Naive thymus-derived CD4-positive, alpha-beta T cell (primary cell): ENCODE measurements at regions of chr2 and their contacts with region 1.

Region 1: DNA sequence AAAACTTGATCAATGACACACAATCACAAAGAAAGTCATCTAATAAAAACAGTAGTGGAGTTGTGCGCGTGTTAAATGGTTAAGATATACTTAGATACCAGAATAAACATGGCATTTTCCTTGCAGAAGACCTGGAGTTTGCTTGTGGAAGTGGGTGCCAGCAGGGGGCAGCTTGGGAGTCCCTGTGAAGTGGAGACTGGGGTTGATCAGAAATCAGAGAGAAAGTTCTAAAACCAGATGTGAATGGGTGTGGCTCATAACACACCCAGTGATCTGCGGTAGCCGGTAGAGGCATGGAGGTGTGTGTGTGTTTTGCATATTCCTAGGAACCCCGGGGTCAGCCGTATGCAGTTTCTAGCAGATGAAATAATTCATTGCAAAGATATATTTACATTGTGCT is 300.1 kb upstream of the TRIB2 start:
- DNase-seq: peak in 8 of 9 donors; percentile 26 to 72 (median 64)
- ATAC-seq: peak; percentile 83
- H3K4me3 ChIP-seq: no peak overlapping the region
- H3K4me3 Mint-ChIP-seq: peak overlapping the region in 9 of 10 donors; percentile 18 to 75 (median 30)
- H3K27ac ChIP-seq: no peak overlapping the region
- H3K27ac Mint-ChIP-seq: peak overlapping the region; percentile 24 to 77 (median 52)
- H3K4me1 ChIP-seq: peaks cover 16 to 23% of the 10 kb centered on the region in 2 donors
- H3K4me1 Mint-ChIP-seq: peaks cover 27 to 82% (median 66%) of the 10 kb centered on the region in 7 donors
- H3K27me3 ChIP-seq: no peaks in the 10 kb centered on the region
- H3K27me3 Mint-ChIP-seq: no peaks in the 10 kb centered on the region

Region 2: GRCh38 chr2:11829947-11830707 is 586.5 kb before region 1 on chr2:
- CTCF ChIA-PET with region 1: no interaction called
- POLR2A ChIA-PET with region 1: no interaction called
- intact Hi-C with region 1: loop called in 1 of 2 experiments (anchors 1 kb)
- DNase-seq: peak in 8 of 9 donors; percentile 53 to 73 (median 63)
- ATAC-seq: peak; percentile 86
- H3K4me3 ChIP-seq: peak overlapping the region; percentile 60
- H3K4me3 Mint-ChIP-seq: peak overlapping the region; percentile 80 to 97 (median 84)
- H3K27ac ChIP-seq: peak overlapping the region; percentile 46
- H3K27ac Mint-ChIP-seq: peak overlapping the region; percentile 21 to 87 (median 78)
- H3K4me1 ChIP-seq: peaks cover 20% of the 10 kb centered on the region in 2 donors
- H3K4me1 Mint-ChIP-seq: peaks cover 18 to 44% (median 33%) of the 10 kb centered on the region in 7 donors
- H3K27me3 ChIP-seq: no peaks in the 10 kb centered on the region
- H3K27me3 Mint-ChIP-seq: peaks cover 0 to 50% (median 0%) of the 10 kb centered on the region in 5 donors

Region 3: GRCh38 chr2:12127638-12128037 is 289.0 kb before region 1 on chr2:
- CTCF ChIA-PET with region 1: no interaction called
- POLR2A ChIA-PET with region 1: interaction called, 4 read pairs
- intact Hi-C with region 1: loop called in 1 of 2 experiments (anchors 1 kb)
- DNase-seq: peak in 6 of 9 donors; percentile 40 to 63 (median 56)
- ATAC-seq: peak; percentile 80
- H3K4me3 ChIP-seq: peak overlapping the region; percentile 10
- H3K4me3 Mint-ChIP-seq: peak overlapping the region in 5 of 10 donors; percentile 34 to 90 (median 73)
- H3K27ac ChIP-seq: peak overlapping the region; percentile 63
- H3K27ac Mint-ChIP-seq: peak overlapping the region in 3 of 9 donors; percentile 84 to 95 (median 87)
- H3K4me1 ChIP-seq: peaks cover 22 to 61% of the 10 kb centered on the region in 2 donors
- H3K4me1 Mint-ChIP-seq: peaks cover 0 to 22% (median 0%) of the 10 kb centered on the region in 7 donors
- H3K27me3 ChIP-seq: no peaks in the 10 kb centered on the region
- H3K27me3 Mint-ChIP-seq: no peaks in the 10 kb centered on the region

Region 4: GRCh38 chr2:12399240-12399639 is 17.4 kb before region 1 on chr2:
- CTCF ChIA-PET with region 1: no interaction called
- POLR2A ChIA-PET with region 1: no interaction called
- intact Hi-C with region 1: no loop called
- DNase-seq: no peak
- ATAC-seq: no peak
- H3K4me3 ChIP-seq: no peak overlapping the region
- H3K4me3 Mint-ChIP-seq: no peak overlapping the region
- H3K27ac ChIP-seq: no peak overlapping the region
- H3K27ac Mint-ChIP-seq: no peak overlapping the region
- H3K4me1 ChIP-seq: no peaks in the 10 kb centered on the region
- H3K4me1 Mint-ChIP-seq: peaks cover 1 to 18% (median 11%) of the 10 kb centered on the region in 7 donors
- H3K27me3 ChIP-seq: no peaks in the 10 kb centered on the region
- H3K27me3 Mint-ChIP-seq: peaks cover 0 to 21% (median 3%) of the 10 kb centered on the region in 5 donors

Region 5: GRCh38 chr2:12430407-12431133 is 14.0 kb after region 1 on chr2:
- CTCF ChIA-PET with region 1: interaction called, 3 read pairs
- POLR2A ChIA-PET with region 1: no interaction called
- intact Hi-C with region 1: loop called in 1 of 2 experiments (anchors 1 kb)
- DNase-seq: peak in 6 of 9 donors; percentile 10 to 28 (median 20)
- ATAC-seq: peak; percentile 87
- H3K4me3 ChIP-seq: peak overlapping the region; percentile 47
- H3K4me3 Mint-ChIP-seq: peak overlapping the region; percentile 31 to 83 (median 77)
- H3K27ac ChIP-seq: peak overlapping the region; percentile 22
- H3K27ac Mint-ChIP-seq: peak overlapping the region; percentile 60 to 91 (median 82)
- H3K4me1 ChIP-seq: peaks cover 0 to 12% of the 10 kb centered on the region in 2 donors
- H3K4me1 Mint-ChIP-seq: peaks cover 25 to 70% (median 49%) of the 10 kb centered on the region in 7 donors
- H3K27me3 ChIP-seq: no peaks in the 10 kb centered on the region
- H3K27me3 Mint-ChIP-seq: no peaks in the 10 kb centered on the region

Region 6: GRCh38 chr2:12501469-12502158 is 85.0 kb after region 1 on chr2:
- CTCF ChIA-PET with region 1: no interaction called
- POLR2A ChIA-PET with region 1: interaction called, 3 read pairs
- intact Hi-C with region 1: loop called (anchors 1 kb)
- DNase-seq: peak in 8 of 9 donors; percentile 39 to 74 (median 70)
- ATAC-seq: peak; percentile 86
- H3K4me3 ChIP-seq: peak overlapping the region; percentile 5
- H3K4me3 Mint-ChIP-seq: peak overlapping the region; percentile 64 to 83 (median 77)
- H3K27ac ChIP-seq: peak overlapping the region; percentile 69
- H3K27ac Mint-ChIP-seq: peak overlapping the region; percentile 87 to 96 (median 91)
- H3K4me1 ChIP-seq: peaks cover 89 to 98% of the 10 kb centered on the region in 2 donors
- H3K4me1 Mint-ChIP-seq: peaks cover 74 to 100% (median 98%) of the 10 kb centered on the region in 7 donors
- H3K27me3 ChIP-seq: no peaks in the 10 kb centered on the region
- H3K27me3 Mint-ChIP-seq: no peaks in the 10 kb centered on the region

Region 7: DNA sequence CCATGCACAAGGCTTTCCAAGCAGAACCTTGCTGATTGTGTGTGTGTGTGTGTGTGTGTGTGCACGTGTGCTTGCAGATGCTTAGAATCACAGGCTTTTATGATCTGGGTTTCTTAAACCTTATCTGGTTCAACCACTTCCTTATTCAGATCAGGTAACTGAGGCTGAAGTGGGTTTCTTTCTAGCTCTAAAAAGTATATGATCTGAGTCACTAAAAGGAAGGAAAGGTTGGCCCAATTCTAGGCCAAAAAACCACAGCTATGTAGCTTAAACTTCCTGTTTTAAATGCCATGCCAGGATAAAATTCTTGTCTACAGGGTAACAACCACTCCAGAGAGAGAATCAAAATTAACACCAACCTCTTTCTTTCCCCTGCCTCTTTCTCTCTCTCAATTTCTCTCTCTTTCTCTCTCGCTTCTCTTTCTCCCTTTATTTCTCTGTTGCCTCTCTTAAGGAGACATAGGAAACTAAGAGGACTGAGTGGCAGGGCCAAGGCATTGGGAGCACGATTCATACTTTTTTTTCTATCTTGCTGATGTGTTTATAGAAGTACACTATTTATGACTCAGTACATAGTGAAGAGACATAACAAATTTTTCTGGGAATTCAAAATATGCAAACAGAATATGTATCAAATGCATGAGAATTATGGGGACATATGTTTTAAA is 440.5 kb after region 1 on chr2:
- CTCF ChIA-PET with region 1: interaction called, 5 read pairs
- POLR2A ChIA-PET with region 1: no interaction called
- intact Hi-C with region 1: loop called (anchors 5 kb)
- DNase-seq: peak in 7 of 9 donors; percentile 46 to 81 (median 73)
- ATAC-seq: peak; percentile 91
- H3K4me3 ChIP-seq: peak overlapping the region; percentile 1
- H3K4me3 Mint-ChIP-seq: no peak overlapping the region
- H3K27ac ChIP-seq: no peak overlapping the region
- H3K27ac Mint-ChIP-seq: peak overlapping the region in 1 of 9 donors; percentile 2
- H3K4me1 ChIP-seq: peaks cover 40 to 56% of the 10 kb centered on the region in 2 donors
- H3K4me1 Mint-ChIP-seq: peaks cover 0 to 25% (median 14%) of the 10 kb centered on the region in 7 donors
- H3K27me3 ChIP-seq: no peaks in the 10 kb centered on the region
- H3K27me3 Mint-ChIP-seq: peaks cover 6 to 12% (median 10%) of the 10 kb centered on the region in 5 donors